K562 (cell line): ENCODE measurements at regions of chr19 and their contacts with region 1.

Region 1: GRCh38 chr19:49653211-49653759 is 11.3 kb downstream of the SCAF1 start:
- DNase-seq: no peak
- ATAC-seq: no peak
- H3K4me3 ChIP-seq: no peak overlapping the region
- H3K27ac ChIP-seq: no peak overlapping the region
- H3K4me1 ChIP-seq: peaks cover 0 to 14% of the 10 kb centered on the region in 2 experiments; a peak in 2 of 5 replicates
- H3K27me3 ChIP-seq: no peaks in the 10 kb centered on the region
- CTCF ChIP-seq: no peak
- EP300 ChIP-seq: no peak
- POLR2A ChIP-seq: 0 out of 2 replicates have a peak, but pooled peaks have one; percentile 34
- RAD21 ChIP-seq: no peak

Region 2: GRCh38 chr19:49640113-49640898 is 13.0 kb before region 1 on chr19 and contains the start of gene RRAS:
- CTCF ChIA-PET with region 1: no interaction called
- POLR2A ChIA-PET with region 1: interaction called, 27 read pairs
- in situ Hi-C with region 1: no loop called
- intact Hi-C with region 1: no loop called
- DNase-seq: peak; percentile 95 to 100 (median 96)
- ATAC-seq: peak; percentile 83
- H3K4me3 ChIP-seq: peak within 1 kb of the TSS; percentile 97
- H3K27ac ChIP-seq: peak within 1 kb of the TSS; percentile 97
- H3K4me1 ChIP-seq: peaks cover 27 to 58% of the 10 kb centered on the region in 2 experiments
- H3K27me3 ChIP-seq: no peaks in the 10 kb centered on the region
- CTCF ChIP-seq: 0 out of 6 replicates have a peak, but pooled peaks of 1 of the 3 experiments have one; percentile 2
- EP300 ChIP-seq: peak; percentile 45; the same call in 1 of the 2 replicates
- POLR2A ChIP-seq: peak; percentile 92
- RAD21 ChIP-seq: no peak
- polyA plus RNA-seq, gene RRAS: 0.70 to 1.3 TPM

Region 3: GRCh38 chr19:49665351-49666119 is 12.2 kb after region 1 on chr19 and contains the starts of genes BCL2L12 and IRF3:
- CTCF ChIA-PET with region 1: no interaction called
- POLR2A ChIA-PET with region 1: interaction called, 28 read pairs
- in situ Hi-C with region 1: no loop called
- intact Hi-C with region 1: no loop called
- DNase-seq: peak; percentile 85 to 99 (median 91)
- ATAC-seq: peak; percentile 92
- H3K4me3 ChIP-seq: peak within 1 kb of the TSS; percentile 81
- H3K27ac ChIP-seq: peak within 1 kb of the TSS; percentile 91
- H3K4me1 ChIP-seq: peaks cover 7 to 33% of the 10 kb centered on the region in 2 experiments; a peak in 4 of 5 replicates
- H3K27me3 ChIP-seq: no peaks in the 10 kb centered on the region
- CTCF ChIP-seq: 0 out of 6 replicates have a peak, but pooled peaks of 1 of the 3 experiments have one; percentile 15
- EP300 ChIP-seq: no peak
- POLR2A ChIP-seq: peak; percentile 89
- RAD21 ChIP-seq: no peak
- polyA plus RNA-seq, gene BCL2L12: 7.4 to 7.5 TPM
- polyA plus RNA-seq, gene IRF3: 7.5 to 11.6 TPM

Region 4: DNA sequence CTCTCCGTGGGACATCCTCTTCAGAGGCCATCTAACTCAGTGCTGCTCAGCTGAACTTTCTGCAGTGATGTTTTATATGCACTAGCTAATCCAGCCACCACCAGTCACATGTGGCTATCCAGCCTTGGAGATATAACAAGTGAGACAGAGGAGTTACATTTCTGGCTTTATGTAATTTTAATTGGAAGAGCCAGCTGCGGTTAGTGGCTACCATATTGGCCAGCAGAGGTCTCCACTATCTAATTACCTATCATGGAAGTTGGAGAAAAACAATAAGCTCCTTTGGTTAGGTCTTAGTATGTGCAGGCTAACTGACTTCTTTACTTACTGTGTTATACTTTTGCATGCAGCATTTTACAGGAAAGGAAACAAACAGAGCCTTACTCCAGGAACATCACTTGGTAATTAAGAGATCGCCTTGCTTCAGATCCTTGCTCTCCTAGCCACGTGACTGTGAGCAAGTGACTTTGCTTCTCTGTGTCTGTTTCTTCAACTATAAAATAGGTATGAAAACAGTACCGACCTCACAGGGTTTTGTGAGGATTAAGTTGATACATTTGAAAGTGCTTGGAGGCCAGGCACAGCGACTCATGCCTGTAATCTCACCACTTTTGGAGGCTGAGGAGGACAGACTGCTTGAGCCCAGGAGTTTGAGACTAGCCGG is 1367.8 kb after region 1 on chr19:
- CTCF ChIA-PET with region 1: no interaction called
- POLR2A ChIA-PET with region 1: no interaction called
- in situ Hi-C with region 1: no loop called
- intact Hi-C with region 1: no loop called
- DNase-seq: peak; percentile 35 to 61 (median 48)
- ATAC-seq: peak; percentile 65
- H3K4me3 ChIP-seq: no peak overlapping the region
- H3K27ac ChIP-seq: no peak overlapping the region
- H3K4me1 ChIP-seq: peaks cover 4 to 30% of the 10 kb centered on the region in 2 experiments
- H3K27me3 ChIP-seq: peaks cover 18 to 53% of the 10 kb centered on the region in 2 experiments
- CTCF ChIP-seq: peak; percentile 62 to 86 (median 78)
- EP300 ChIP-seq: no peak
- POLR2A ChIP-seq: no peak
- RAD21 ChIP-seq: peak; percentile 58 to 82